SK-N-SH (cell line): ENCODE measurements at regions of chr1 and their contacts with region 1.

Region 1: GRCh38 chr1:104791030-104791429 is 1041.3 kb downstream of the AMY1C start:
- DNase-seq: no peak
- H3K4me3 ChIP-seq: no peak overlapping the region
- H3K27ac ChIP-seq: no peak overlapping the region
- H3K4me1 ChIP-seq: no peaks in the 10 kb centered on the region
- H3K27me3 ChIP-seq: no peaks in the 10 kb centered on the region
- CTCF ChIP-seq: no peak
- EP300 ChIP-seq: no peak
- RAD21 ChIP-seq: no peak

Region 2: GRCh38 chr1:104780470-104781078 is 10.5 kb before region 1 on chr1:
- CTCF ChIA-PET with region 1: interaction called, 12 read pairs
- POLR2A ChIA-PET with region 1: no interaction called
- DNase-seq: peak; percentile 56
- H3K4me3 ChIP-seq: peak overlapping the region in 1 of 2 experiments; percentile 33; a peak in 1 of 4 replicates
- H3K27ac ChIP-seq: no peak overlapping the region
- H3K4me1 ChIP-seq: no peaks in the 10 kb centered on the region
- H3K27me3 ChIP-seq: no peaks in the 10 kb centered on the region
- CTCF ChIP-seq: peak; percentile 90
- EP300 ChIP-seq: no peak
- RAD21 ChIP-seq: peak; percentile 88